ENCODE measurements at regions of chr18 and their contacts with region 1.

Region 1: DNA sequence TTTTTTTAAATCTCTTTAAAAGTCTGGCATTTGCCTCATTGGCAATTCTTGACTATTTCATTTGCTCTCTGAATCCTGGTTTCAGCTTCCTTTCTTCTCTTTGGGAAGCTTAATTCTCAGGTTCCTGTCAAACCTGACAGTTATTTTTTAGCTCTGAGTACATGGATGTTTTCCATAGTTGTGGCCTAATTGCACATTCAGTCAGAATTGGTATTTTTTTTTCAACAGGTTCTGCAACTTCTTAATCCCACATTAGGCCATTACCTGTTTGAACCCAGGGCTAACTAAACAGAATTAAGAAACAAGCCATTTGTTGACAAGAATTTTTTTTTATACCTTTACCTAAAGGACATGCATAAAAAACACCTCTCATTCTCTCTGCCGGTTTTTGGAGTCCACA is 338.8 kb downstream of the SETBP1 start:
- DNase-seq: no peak
- ATAC-seq: no peak
- H3K4me3 ChIP-seq: no peak overlapping the region
- H3K4me3 Mint-ChIP-seq: no peak overlapping the region
- H3K27ac ChIP-seq: no peak overlapping the region
- H3K27ac Mint-ChIP-seq: no peak overlapping the region
- H3K4me1 ChIP-seq: no peaks in the 10 kb centered on the region
- H3K4me1 Mint-ChIP-seq: no peaks in the 10 kb centered on the region
- H3K27me3 ChIP-seq: no peaks in the 10 kb centered on the region
- H3K27me3 Mint-ChIP-seq: no peaks in the 10 kb centered on the region
- CTCF ChIP-seq: no peak

Region 2: GRCh38 chr18:44709307-44710126 is 310.0 kb before region 1 on chr18:
- CTCF ChIA-PET with region 1: no interaction called
- POLR2A ChIA-PET with region 1: no interaction called
- intact Hi-C with region 1: no loop called
- DNase-seq: peak in 1 of 14 experiments; percentile 30
- ATAC-seq: no peak
- H3K4me3 ChIP-seq: no peak overlapping the region
- H3K4me3 Mint-ChIP-seq: no peak overlapping the region
- H3K27ac ChIP-seq: no peak overlapping the region
- H3K27ac Mint-ChIP-seq: no peak overlapping the region
- H3K4me1 ChIP-seq: no peaks in the 10 kb centered on the region
- H3K4me1 Mint-ChIP-seq: no peaks in the 10 kb centered on the region
- H3K27me3 ChIP-seq: no peaks in the 10 kb centered on the region
- H3K27me3 Mint-ChIP-seq: no peaks in the 10 kb centered on the region
- CTCF ChIP-seq: no peak

Region 3: GRCh38 chr18:44750774-44751173 is 268.7 kb before region 1 on chr18:
- CTCF ChIA-PET with region 1: no interaction called
- POLR2A ChIA-PET with region 1: no interaction called
- intact Hi-C with region 1: no loop called
- DNase-seq: no peak
- ATAC-seq: no peak
- H3K4me3 ChIP-seq: no peak overlapping the region
- H3K4me3 Mint-ChIP-seq: no peak overlapping the region
- H3K27ac ChIP-seq: no peak overlapping the region
- H3K27ac Mint-ChIP-seq: no peak overlapping the region
- H3K4me1 ChIP-seq: no peaks in the 10 kb centered on the region
- H3K4me1 Mint-ChIP-seq: no peaks in the 10 kb centered on the region
- H3K27me3 ChIP-seq: no peaks in the 10 kb centered on the region
- H3K27me3 Mint-ChIP-seq: no peaks in the 10 kb centered on the region
- CTCF ChIP-seq: no peak

Region 4: GRCh38 chr18:44973282-44973681 is 46.2 kb before region 1 on chr18:
- CTCF ChIA-PET with region 1: no interaction called
- POLR2A ChIA-PET with region 1: no interaction called
- intact Hi-C with region 1: loop called in 1 of 2 experiments (anchors 1 kb)
- DNase-seq: peak in 2 of 14 experiments; percentile 2 to 22
- ATAC-seq: no peak
- H3K4me3 ChIP-seq: no peak overlapping the region
- H3K4me3 Mint-ChIP-seq: no peak overlapping the region
- H3K27ac ChIP-seq: no peak overlapping the region
- H3K27ac Mint-ChIP-seq: no peak overlapping the region
- H3K4me1 ChIP-seq: no peaks in the 10 kb centered on the region
- H3K4me1 Mint-ChIP-seq: no peaks in the 10 kb centered on the region
- H3K27me3 ChIP-seq: no peaks in the 10 kb centered on the region
- H3K27me3 Mint-ChIP-seq: no peaks in the 10 kb centered on the region
- CTCF ChIP-seq: no peak

Region 5: GRCh38 chr18:44996261-44996660 is 23.2 kb before region 1 on chr18:
- CTCF ChIA-PET with region 1: no interaction called
- POLR2A ChIA-PET with region 1: no interaction called
- intact Hi-C with region 1: no loop called
- DNase-seq: peak in 2 of 14 experiments; percentile 2 to 10
- ATAC-seq: no peak
- H3K4me3 ChIP-seq: no peak overlapping the region
- H3K4me3 Mint-ChIP-seq: no peak overlapping the region
- H3K27ac ChIP-seq: no peak overlapping the region
- H3K27ac Mint-ChIP-seq: no peak overlapping the region
- H3K4me1 ChIP-seq: no peaks in the 10 kb centered on the region
- H3K4me1 Mint-ChIP-seq: no peaks in the 10 kb centered on the region
- H3K27me3 ChIP-seq: no peaks in the 10 kb centered on the region
- H3K27me3 Mint-ChIP-seq: no peaks in the 10 kb centered on the region
- CTCF ChIP-seq: no peak